ENCODE measurements at regions of chr1 and their contacts with region 1.

Region 1: GRCh38 chr1:235328357-235329138 is at the start of gene GGPS1:
- DNase-seq: peak; percentile 99
- ATAC-seq: peak; percentile 84
- H3K4me3 Mint-ChIP-seq: no peak within 1 kb of the TSS
- H3K27ac Mint-ChIP-seq: no peak within 1 kb of the TSS
- H3K4me1 Mint-ChIP-seq: peaks cover 42% of the 10 kb centered on the region
- H3K27me3 Mint-ChIP-seq: no peaks in the 10 kb centered on the region
- total RNA-seq, gene GGPS1: 35.6 to 37.4 TPM

Region 2: GRCh38 chr1:234478481-234479309 is 849.9 kb before region 1 on chr1 and contains the start of gene TARBP1:
- CTCF ChIA-PET with region 1: no interaction called
- POLR2A ChIA-PET with region 1: no interaction called
- intact Hi-C with region 1: loop called in 1 of 2 experiments (anchors 2 kb)
- DNase-seq: peak; percentile 86
- ATAC-seq: peak; percentile 81
- H3K4me3 Mint-ChIP-seq: peak within 1 kb of the TSS; percentile 82
- H3K27ac Mint-ChIP-seq: peak within 1 kb of the TSS; percentile 80
- H3K4me1 Mint-ChIP-seq: peaks cover 56% of the 10 kb centered on the region
- H3K27me3 Mint-ChIP-seq: peaks cover 16% of the 10 kb centered on the region
- total RNA-seq, gene TARBP1: 37.7 to 41.5 TPM

Region 3: GRCh38 chr1:235160957-235161684 is 167.4 kb before region 1 on chr1 and contains the start of gene RBM34:
- CTCF ChIA-PET with region 1: no interaction called
- POLR2A ChIA-PET with region 1: interaction called, 4 read pairs
- intact Hi-C with region 1: loop called (anchors 1 to 2 kb)
- DNase-seq: peak; percentile 97
- ATAC-seq: peak; percentile 91
- H3K4me3 Mint-ChIP-seq: peak within 1 kb of the TSS; percentile 93
- H3K27ac Mint-ChIP-seq: peak within 1 kb of the TSS; percentile 95
- H3K4me1 Mint-ChIP-seq: peaks cover 15% of the 10 kb centered on the region
- H3K27me3 Mint-ChIP-seq: no peaks in the 10 kb centered on the region
- total RNA-seq, gene RBM34: 126 to 154 TPM

Region 4: DNA sequence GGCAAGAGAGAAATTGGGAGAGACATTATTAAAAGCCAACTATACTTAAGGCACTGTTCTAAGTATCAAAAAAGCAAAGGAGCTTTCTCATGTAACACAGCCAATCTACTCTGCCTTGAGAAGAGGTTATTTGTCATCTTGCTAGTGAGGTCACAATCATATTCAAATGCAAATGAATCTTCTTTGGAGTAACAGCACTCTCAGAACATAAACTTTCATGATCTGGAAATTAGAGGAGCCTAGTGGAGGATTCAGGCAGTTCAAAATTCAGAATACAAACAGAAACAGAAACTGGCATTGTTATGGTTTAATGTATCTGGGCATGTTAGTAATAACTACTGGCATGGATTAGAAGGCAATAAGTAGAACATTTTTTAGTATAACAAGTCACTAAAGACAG is 57.9 kb before region 1 on chr1:
- CTCF ChIA-PET with region 1: interaction called, 10 read pairs
- POLR2A ChIA-PET with region 1: no interaction called
- intact Hi-C with region 1: loop called in 1 of 2 experiments (anchors 2 kb)
- DNase-seq: no peak
- ATAC-seq: peak; percentile 89
- H3K4me3 Mint-ChIP-seq: no peak overlapping the region
- H3K27ac Mint-ChIP-seq: peak overlapping the region; percentile 64
- H3K4me1 Mint-ChIP-seq: peaks cover 60% of the 10 kb centered on the region
- H3K27me3 Mint-ChIP-seq: no peaks in the 10 kb centered on the region

Region 5: DNA sequence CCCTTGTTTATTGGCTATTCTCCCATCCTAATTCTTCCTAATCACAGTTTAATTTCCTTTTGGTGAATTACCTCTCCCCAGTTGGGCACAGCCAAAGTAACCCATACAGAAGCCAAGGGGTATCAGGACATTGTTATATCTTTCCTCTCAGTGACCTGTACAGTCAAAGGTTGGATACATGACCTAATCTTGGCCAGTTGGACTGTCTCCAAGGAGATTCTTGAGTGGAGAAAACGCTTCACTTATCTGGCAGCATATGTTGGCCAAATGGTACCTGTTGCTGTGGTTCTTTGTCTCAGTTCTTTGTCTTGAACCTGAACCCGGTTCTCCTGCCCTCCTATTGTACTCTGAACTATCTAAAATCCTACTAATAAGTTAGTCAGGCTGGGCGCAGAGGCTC is 23.4 kb after region 1 on chr1:
- CTCF ChIA-PET with region 1: no interaction called
- POLR2A ChIA-PET with region 1: no interaction called
- intact Hi-C with region 1: no loop called
- DNase-seq: no peak
- ATAC-seq: no peak
- H3K4me3 Mint-ChIP-seq: no peak overlapping the region
- H3K27ac Mint-ChIP-seq: no peak overlapping the region
- H3K4me1 Mint-ChIP-seq: no peaks in the 10 kb centered on the region
- H3K27me3 Mint-ChIP-seq: no peaks in the 10 kb centered on the region

Region 6: DNA sequence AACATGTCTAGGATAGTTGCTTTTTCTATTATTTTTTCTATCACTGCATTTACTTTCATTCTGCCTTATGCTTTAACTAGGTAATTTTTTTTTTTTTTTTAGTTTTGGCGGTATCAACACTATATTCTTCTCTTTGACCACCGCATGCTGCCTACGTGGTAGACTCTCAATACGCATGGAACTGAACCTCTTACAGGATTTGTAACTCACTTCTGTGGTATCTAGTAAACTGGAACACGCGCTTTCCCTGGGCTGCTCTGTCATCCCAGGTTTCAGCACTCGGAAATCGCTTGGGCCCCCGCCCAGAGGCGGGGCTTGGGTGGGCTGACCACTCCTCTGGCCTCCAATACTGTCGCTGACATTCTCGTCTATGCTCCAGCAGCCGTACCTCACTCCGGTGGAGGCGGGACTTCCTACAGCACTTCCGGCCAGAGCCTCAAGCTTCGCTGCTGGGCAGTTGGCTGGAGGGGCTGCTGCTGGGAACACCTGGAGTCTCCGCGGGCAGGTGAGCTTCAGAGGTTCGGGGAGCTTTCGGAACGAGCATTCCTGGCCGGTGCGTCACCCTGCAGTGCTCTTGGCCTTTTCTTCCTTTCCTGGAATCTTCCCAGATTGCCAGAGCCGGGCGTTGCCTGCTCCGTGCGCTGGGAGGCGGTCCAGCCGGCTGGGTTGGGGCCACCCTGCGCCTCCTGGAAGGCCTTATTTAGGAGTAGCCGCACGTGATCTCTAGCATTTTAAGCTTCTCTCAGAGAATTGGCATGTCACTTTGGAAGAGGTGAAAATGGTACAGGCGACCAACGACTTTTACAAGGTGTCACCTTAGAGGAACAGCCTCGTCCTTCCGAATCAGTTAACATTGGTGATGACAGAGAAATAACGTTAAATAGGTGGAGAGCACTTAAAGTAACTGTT is 38.7 kb after region 1 on chr1 and contains the start of gene TBCE:
- CTCF ChIA-PET with region 1: interaction called, 3 read pairs
- POLR2A ChIA-PET with region 1: interaction called, 4 read pairs
- intact Hi-C with region 1: loop called (anchors 1 kb)
- DNase-seq: peak; percentile 92
- ATAC-seq: peak; percentile 98
- H3K4me3 Mint-ChIP-seq: peak within 1 kb of the TSS; percentile 98
- H3K27ac Mint-ChIP-seq: peak within 1 kb of the TSS; percentile 93
- H3K4me1 Mint-ChIP-seq: peaks cover 22% of the 10 kb centered on the region
- H3K27me3 Mint-ChIP-seq: no peaks in the 10 kb centered on the region
- total RNA-seq, gene TBCE: 22.3 to 26.1 TPM

Measured in activated CD4-positive, alpha-beta T cell treated with anti-CD3 and anti-CD28 coated beads for 36 hours (primary cell).